ENCODE measurements at regions of chr1 and their contacts with region 1.

Region 1: GRCh38 chr1:167687919-167688519 is 33.8 kb upstream of the MPZL1 start:
- DNase-seq: peak; percentile 87
- ATAC-seq: peak; percentile 76
- H3K4me3 ChIP-seq: no peak overlapping the region
- H3K4me3 Mint-ChIP-seq: no peak overlapping the region
- H3K27ac ChIP-seq: peak overlapping the region in 1 of 2 donors; percentile 58
- H3K27ac Mint-ChIP-seq: peak overlapping the region; percentile 77
- H3K4me1 ChIP-seq: peaks cover 4 to 21% of the 10 kb centered on the region in 2 donors
- H3K4me1 Mint-ChIP-seq: peaks cover 48% of the 10 kb centered on the region
- H3K27me3 ChIP-seq: no peaks in the 10 kb centered on the region
- H3K27me3 Mint-ChIP-seq: no peaks in the 10 kb centered on the region
- CTCF ChIP-seq: peak; percentile 96

Region 2: GRCh38 chr1:167553136-167554027 is 134.6 kb before region 1 on chr1 and contains the start of gene CREG1:
- CTCF ChIA-PET with region 1: interaction called, 40 read pairs
- POLR2A ChIA-PET with region 1: no interaction called
- intact Hi-C with region 1: loop called (anchors 1 kb)
- DNase-seq: peak; percentile 92
- ATAC-seq: peak; percentile 98
- H3K4me3 ChIP-seq: peak within 1 kb of the TSS; percentile 56 to 82 (median 68)
- H3K4me3 Mint-ChIP-seq: peak within 1 kb of the TSS; percentile 96
- H3K27ac ChIP-seq: no peak within 1 kb of the TSS
- H3K27ac Mint-ChIP-seq: peak within 1 kb of the TSS; percentile 82
- H3K4me1 ChIP-seq: peaks cover 10 to 23% of the 10 kb centered on the region in 2 donors
- H3K4me1 Mint-ChIP-seq: peaks cover 23% of the 10 kb centered on the region
- H3K27me3 ChIP-seq: no peaks in the 10 kb centered on the region
- H3K27me3 Mint-ChIP-seq: no peaks in the 10 kb centered on the region
- CTCF ChIP-seq: no peak
- total RNA-seq, gene CREG1: 8.1 and 8.4 TPM in 2 replicates

Region 3: DNA sequence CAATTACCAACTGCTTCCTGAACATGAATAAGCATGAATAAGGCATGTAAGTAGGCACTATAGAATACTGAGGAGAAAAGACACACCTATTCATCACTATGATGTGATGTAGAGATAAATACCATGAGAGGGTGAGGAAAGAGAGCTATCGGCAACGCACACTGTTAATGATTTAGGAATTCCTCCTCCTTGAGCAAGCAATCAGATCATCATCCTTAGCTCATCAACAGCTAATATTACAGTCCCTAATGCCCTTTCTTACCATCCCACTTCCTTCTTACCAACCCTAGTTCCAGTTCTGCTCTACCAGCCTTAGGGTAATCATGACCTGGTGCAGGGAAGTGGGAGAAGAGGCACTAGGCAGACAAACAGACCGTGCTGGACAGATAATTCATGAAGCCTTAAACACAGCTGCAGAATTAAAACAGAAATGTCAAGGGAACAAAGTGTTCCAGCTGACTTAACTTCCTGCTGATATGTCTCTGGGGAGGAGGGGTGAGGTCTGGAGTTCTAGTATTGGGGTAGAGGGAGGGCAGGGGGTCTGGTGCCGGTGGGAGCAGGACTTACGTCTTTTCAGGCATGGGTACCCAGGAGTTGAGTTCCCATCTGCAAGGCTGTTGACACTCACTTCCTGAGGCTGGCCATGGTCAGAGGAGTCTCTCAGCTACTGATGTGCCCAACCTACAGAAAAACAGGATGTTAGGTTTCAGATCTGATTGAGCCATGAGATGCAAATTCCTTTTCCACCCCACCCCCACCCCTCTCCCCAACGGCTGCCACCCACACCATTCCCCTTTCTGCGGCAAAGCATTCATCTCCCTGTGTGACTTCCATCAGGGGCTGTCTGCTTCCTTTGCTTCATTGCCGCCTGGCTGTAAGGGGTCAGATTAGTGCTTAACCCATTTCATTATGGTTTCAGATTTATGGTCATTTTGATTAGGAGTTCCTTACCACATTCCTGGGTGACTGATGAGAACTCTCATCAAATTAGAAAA is 70.6 kb before region 1 on chr1:
- CTCF ChIA-PET with region 1: interaction called, 30 read pairs
- POLR2A ChIA-PET with region 1: interaction called, 3 read pairs
- intact Hi-C with region 1: no loop called
- DNase-seq: peak; percentile 94
- ATAC-seq: peak; percentile 90
- H3K4me3 ChIP-seq: peak overlapping the region; percentile 42 to 81 (median 58)
- H3K4me3 Mint-ChIP-seq: peak overlapping the region; percentile 84
- H3K27ac ChIP-seq: peak overlapping the region; percentile 89 to 97
- H3K27ac Mint-ChIP-seq: peak overlapping the region; percentile 92
- H3K4me1 ChIP-seq: peaks cover 87 to 92% of the 10 kb centered on the region in 2 donors
- H3K4me1 Mint-ChIP-seq: peaks cover 86% of the 10 kb centered on the region
- H3K27me3 ChIP-seq: no peaks in the 10 kb centered on the region
- H3K27me3 Mint-ChIP-seq: no peaks in the 10 kb centered on the region
- CTCF ChIP-seq: no peak

Region 4: DNA sequence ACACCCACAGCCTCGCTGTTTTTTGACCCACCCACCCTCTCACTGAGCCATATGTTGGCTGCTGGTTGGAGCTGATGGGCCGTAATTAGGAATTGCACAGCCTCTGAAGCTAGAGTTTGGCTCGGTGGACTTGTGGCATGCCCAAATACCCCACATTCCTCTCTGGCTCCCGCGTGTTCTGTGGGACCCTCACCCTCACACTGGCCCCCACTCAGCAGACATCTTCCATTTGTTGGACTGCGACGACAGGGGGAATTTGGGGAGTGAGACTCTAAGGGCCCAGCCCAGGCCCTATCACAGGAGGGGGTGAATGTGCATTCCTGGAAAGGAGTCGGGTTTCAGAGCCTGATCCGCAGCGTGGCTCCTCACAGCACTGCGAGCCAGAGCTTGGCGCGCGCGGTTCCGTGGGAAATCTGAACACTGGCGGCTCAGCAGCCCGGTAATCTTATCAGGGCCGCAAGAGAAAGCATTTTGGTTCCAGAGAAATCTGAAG is 52.8 kb before region 1 on chr1:
- CTCF ChIA-PET with region 1: interaction called, 42 read pairs
- POLR2A ChIA-PET with region 1: interaction called, 5 read pairs
- intact Hi-C with region 1: loop called (anchors 2 kb)
- DNase-seq: no peak
- ATAC-seq: no peak
- H3K4me3 ChIP-seq: no peak overlapping the region
- H3K4me3 Mint-ChIP-seq: peak overlapping the region; percentile 98
- H3K27ac ChIP-seq: peak overlapping the region in 1 of 2 donors; percentile 93
- H3K27ac Mint-ChIP-seq: peak overlapping the region; percentile 55
- H3K4me1 ChIP-seq: peaks cover 72 to 77% of the 10 kb centered on the region in 2 donors
- H3K4me1 Mint-ChIP-seq: peaks cover 83% of the 10 kb centered on the region
- H3K27me3 ChIP-seq: no peaks in the 10 kb centered on the region
- H3K27me3 Mint-ChIP-seq: no peaks in the 10 kb centered on the region
- CTCF ChIP-seq: no peak

Region 5: DNA sequence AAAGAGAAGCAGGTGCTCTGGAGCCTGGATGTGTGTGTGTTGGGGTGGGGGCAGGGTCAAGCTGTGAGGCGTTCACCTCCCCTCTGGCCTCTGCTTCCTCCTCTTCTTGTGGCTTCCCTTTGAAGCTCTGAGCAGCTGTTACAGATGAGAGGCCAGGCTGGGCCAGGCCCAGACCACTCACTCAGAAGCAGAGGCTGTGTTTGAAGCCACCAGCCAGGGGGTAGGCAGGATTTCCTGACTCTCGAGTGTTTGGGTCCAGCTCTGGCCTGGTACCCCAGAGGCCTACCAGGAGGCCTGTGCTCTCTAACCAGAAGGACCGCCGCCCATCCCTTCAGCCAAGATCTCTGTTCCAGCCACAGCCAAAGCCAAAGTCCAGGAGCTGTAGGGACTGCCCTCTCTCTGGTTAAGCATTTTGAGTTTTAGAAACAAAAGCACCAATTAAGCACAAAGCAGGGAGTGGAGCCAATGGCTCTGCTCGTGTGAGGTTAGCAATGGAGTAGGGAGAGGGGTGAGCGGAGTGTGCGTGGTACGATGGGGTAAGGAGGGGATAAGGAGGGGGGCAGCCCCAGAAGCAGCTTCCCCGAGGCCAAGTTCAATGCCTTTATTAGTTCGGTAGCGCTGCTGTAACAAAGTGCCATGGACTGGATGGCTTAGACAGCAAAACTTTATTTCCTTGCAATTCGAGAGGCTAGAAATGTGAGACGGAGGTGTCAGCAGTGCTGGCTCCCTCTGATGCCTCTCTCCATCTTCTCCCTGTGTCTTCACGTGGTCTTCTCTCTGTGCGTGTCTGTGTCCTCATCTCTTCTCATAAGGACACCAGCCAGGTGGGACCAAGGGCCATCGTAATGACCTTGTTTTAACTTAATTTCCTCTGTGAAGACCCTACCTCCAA is 37.5 kb before region 1 on chr1:
- CTCF ChIA-PET with region 1: interaction called, 29 read pairs
- POLR2A ChIA-PET with region 1: interaction called, 3 read pairs
- intact Hi-C with region 1: loop called (anchors 2 kb)
- DNase-seq: peak; percentile 60
- ATAC-seq: peak; percentile 73
- H3K4me3 ChIP-seq: peak overlapping the region in 3 of 5 experiments; percentile 1 to 16 (median 15)
- H3K4me3 Mint-ChIP-seq: peak overlapping the region; percentile 84
- H3K27ac ChIP-seq: peak overlapping the region; percentile 76 to 83
- H3K27ac Mint-ChIP-seq: peak overlapping the region; percentile 94
- H3K4me1 ChIP-seq: peaks cover 83 to 89% of the 10 kb centered on the region in 2 donors
- H3K4me1 Mint-ChIP-seq: peaks cover 89% of the 10 kb centered on the region
- H3K27me3 ChIP-seq: no peaks in the 10 kb centered on the region
- H3K27me3 Mint-ChIP-seq: no peaks in the 10 kb centered on the region
- CTCF ChIP-seq: no peak

Region 6: GRCh38 chr1:167676205-167676915 is 11.7 kb before region 1 on chr1:
- CTCF ChIA-PET with region 1: interaction called, 37 read pairs
- POLR2A ChIA-PET with region 1: no interaction called
- intact Hi-C with region 1: no loop called
- DNase-seq: no peak
- ATAC-seq: no peak
- H3K4me3 ChIP-seq: no peak overlapping the region
- H3K4me3 Mint-ChIP-seq: peak overlapping the region; percentile 32
- H3K27ac ChIP-seq: peak overlapping the region; percentile 20 to 71
- H3K27ac Mint-ChIP-seq: peak overlapping the region; percentile 77
- H3K4me1 ChIP-seq: peaks cover 79 to 81% of the 10 kb centered on the region in 2 donors
- H3K4me1 Mint-ChIP-seq: peaks cover 33% of the 10 kb centered on the region
- H3K27me3 ChIP-seq: no peaks in the 10 kb centered on the region
- H3K27me3 Mint-ChIP-seq: no peaks in the 10 kb centered on the region
- CTCF ChIP-seq: no peak

Region 7: GRCh38 chr1:167715157-167715999 is 27.4 kb after region 1 on chr1:
- CTCF ChIA-PET with region 1: interaction called, 13 read pairs
- POLR2A ChIA-PET with region 1: no interaction called
- intact Hi-C with region 1: no loop called
- DNase-seq: peak; percentile 94
- ATAC-seq: peak; percentile 58
- H3K4me3 ChIP-seq: peak overlapping the region; percentile 80 to 94 (median 91)
- H3K4me3 Mint-ChIP-seq: peak overlapping the region; percentile 93
- H3K27ac ChIP-seq: peak overlapping the region in 1 of 2 donors; percentile 54
- H3K27ac Mint-ChIP-seq: peak overlapping the region; percentile 98
- H3K4me1 ChIP-seq: peaks cover 37 to 41% of the 10 kb centered on the region in 2 donors
- H3K4me1 Mint-ChIP-seq: peaks cover 44% of the 10 kb centered on the region
- H3K27me3 ChIP-seq: no peaks in the 10 kb centered on the region
- H3K27me3 Mint-ChIP-seq: no peaks in the 10 kb centered on the region
- CTCF ChIP-seq: peak; percentile 85

Measured in B cell (primary cell).